Posterior vena cava (tissue), 2 donors: ENCODE measurements at regions of chr11 and their contacts with region 1.

Region 1: GRCh38 chr11:130002846-130003716 is 446 bp upstream of the PRDM10 start:
- DNase-seq: peak; percentile 98

Region 2: GRCh38 chr11:130069684-130070108 is 66.6 kb after region 1 on chr11 and contains the start of gene APLP2:
- intact Hi-C with region 1: loop called (anchors 10 kb)
- DNase-seq: peak; percentile 99
- total RNA-seq, gene APLP2: 284 to 350 TPM